Ovary (tissue), 10 donors: ENCODE measurements at regions of chr2 and their contacts with region 1.

Region 1: GRCh38 chr2:7572450-7572849 is 655.2 kb downstream of the RNF144A start:
- DNase-seq: no peak
- H3K4me3 ChIP-seq: no peak overlapping the region
- H3K27ac ChIP-seq: no peak overlapping the region
- H3K4me1 ChIP-seq: no peaks in the 10 kb centered on the region
- H3K27me3 ChIP-seq: no peaks in the 10 kb centered on the region
- CTCF ChIP-seq: no peak
- EP300 ChIP-seq: no peak
- POLR2A ChIP-seq: no peak

Region 2: GRCh38 chr2:7348761-7349160 is 223.7 kb before region 1 on chr2:
- intact Hi-C with region 1: no loop called
- DNase-seq: no peak
- H3K4me3 ChIP-seq: no peak overlapping the region
- H3K27ac ChIP-seq: no peak overlapping the region
- H3K4me1 ChIP-seq: no peaks in the 10 kb centered on the region
- H3K27me3 ChIP-seq: no peaks in the 10 kb centered on the region
- CTCF ChIP-seq: no peak
- EP300 ChIP-seq: no peak
- POLR2A ChIP-seq: no peak

Region 3: DNA sequence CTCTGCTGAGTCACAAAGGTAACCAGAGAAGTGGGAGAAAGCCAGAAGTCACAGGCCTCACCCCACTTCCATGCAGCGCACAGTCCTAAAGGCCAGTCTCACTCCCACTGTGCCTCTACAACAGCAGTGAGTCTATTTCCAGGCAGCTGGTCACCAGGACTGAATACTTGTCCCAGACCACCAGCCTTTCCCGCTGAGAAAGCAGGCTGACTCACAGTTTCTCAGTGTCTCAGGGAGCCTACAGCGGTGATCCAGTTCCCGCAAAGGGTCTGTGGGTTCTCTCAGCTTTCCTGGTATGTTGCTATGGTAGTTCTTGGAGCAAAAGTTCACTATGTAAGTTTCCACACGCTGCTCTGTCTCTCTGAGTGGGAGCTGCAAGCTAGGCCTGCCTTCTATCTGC is 32.7 kb before region 1 on chr2:
- intact Hi-C with region 1: loop called in 1 of 4 experiments (anchors 1 kb)
- DNase-seq: no peak
- H3K4me3 ChIP-seq: no peak overlapping the region
- H3K27ac ChIP-seq: no peak overlapping the region
- H3K4me1 ChIP-seq: no peaks in the 10 kb centered on the region
- H3K27me3 ChIP-seq: no peaks in the 10 kb centered on the region
- CTCF ChIP-seq: no peak
- EP300 ChIP-seq: no peak
- POLR2A ChIP-seq: no peak

Region 4: GRCh38 chr2:7852546-7852945 is 280.1 kb after region 1 on chr2:
- intact Hi-C with region 1: loop called in 1 of 4 experiments (anchors 5 kb)
- DNase-seq: no peak
- H3K4me3 ChIP-seq: no peak overlapping the region
- H3K27ac ChIP-seq: no peak overlapping the region
- H3K4me1 ChIP-seq: no peaks in the 10 kb centered on the region
- H3K27me3 ChIP-seq: no peaks in the 10 kb centered on the region
- CTCF ChIP-seq: no peak
- EP300 ChIP-seq: no peak
- POLR2A ChIP-seq: no peak

Region 5: DNA sequence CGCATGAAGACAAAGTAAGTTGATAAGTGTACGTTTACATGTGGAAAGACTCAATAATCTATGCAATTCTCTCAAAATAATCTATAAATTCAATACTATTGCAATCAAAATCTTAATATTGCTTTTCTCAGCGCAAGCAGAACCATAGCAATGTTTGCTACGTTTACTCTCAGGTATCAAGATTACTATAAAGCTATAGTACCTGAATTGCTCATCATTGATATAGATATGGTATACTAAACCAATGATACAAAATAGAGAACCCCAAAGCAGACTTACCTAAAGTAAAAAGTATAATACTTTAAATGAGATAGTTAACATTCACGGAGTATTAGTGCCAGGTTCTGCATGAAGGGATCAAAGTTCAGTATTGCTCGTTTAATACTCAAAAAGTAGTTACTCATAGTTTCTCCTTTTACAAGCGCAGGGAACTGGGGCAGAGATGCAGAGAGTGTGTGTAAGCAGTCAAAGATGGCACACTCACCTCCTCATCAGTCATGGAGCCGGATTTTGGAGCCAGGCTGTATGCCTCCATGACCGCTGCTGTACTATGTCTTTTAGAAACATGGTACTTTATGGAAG is 718.4 kb after region 1 on chr2:
- intact Hi-C with region 1: loop called in 1 of 4 experiments (anchors 5 kb)
- DNase-seq: no peak
- H3K4me3 ChIP-seq: no peak overlapping the region
- H3K27ac ChIP-seq: no peak overlapping the region
- H3K4me1 ChIP-seq: no peaks in the 10 kb centered on the region
- H3K27me3 ChIP-seq: no peaks in the 10 kb centered on the region
- CTCF ChIP-seq: no peak
- EP300 ChIP-seq: no peak
- POLR2A ChIP-seq: no peak